Posterior cingulate gyrus (tissue), 11 donors: ENCODE measurements at regions of chr9 and their contacts with region 1.

Region 1: DNA sequence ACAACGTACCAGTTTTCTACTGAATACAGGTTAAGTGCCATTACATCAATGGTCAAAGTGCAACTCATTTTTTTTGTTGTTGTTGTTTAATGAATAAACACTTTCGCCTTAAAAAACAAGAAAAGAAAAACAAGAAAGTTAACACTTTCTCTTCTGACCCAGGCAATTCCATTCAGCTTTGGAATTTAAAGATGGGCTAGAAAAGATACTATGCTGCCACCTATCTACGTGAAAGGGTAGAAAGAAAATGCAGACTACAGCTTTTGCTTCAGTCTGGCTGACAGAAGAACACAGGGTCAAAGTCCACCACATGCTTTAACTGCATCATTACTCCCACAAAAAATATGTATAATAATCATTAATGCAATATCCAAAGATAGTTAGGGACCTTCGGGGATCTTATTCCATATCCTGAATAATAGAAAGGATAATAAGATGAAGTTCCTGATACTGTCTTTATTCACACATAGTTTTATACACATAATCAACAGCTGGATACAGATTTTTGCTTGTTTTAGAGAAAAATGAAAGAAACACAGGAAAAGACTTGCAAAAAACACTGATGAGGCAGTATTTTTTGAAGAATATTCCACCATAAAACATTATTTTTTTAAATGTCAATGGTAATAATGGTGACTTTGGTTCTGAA is 40.4 kb downstream of the ZDHHC21 start:
- DNase-seq: no peak

Region 2: DNA sequence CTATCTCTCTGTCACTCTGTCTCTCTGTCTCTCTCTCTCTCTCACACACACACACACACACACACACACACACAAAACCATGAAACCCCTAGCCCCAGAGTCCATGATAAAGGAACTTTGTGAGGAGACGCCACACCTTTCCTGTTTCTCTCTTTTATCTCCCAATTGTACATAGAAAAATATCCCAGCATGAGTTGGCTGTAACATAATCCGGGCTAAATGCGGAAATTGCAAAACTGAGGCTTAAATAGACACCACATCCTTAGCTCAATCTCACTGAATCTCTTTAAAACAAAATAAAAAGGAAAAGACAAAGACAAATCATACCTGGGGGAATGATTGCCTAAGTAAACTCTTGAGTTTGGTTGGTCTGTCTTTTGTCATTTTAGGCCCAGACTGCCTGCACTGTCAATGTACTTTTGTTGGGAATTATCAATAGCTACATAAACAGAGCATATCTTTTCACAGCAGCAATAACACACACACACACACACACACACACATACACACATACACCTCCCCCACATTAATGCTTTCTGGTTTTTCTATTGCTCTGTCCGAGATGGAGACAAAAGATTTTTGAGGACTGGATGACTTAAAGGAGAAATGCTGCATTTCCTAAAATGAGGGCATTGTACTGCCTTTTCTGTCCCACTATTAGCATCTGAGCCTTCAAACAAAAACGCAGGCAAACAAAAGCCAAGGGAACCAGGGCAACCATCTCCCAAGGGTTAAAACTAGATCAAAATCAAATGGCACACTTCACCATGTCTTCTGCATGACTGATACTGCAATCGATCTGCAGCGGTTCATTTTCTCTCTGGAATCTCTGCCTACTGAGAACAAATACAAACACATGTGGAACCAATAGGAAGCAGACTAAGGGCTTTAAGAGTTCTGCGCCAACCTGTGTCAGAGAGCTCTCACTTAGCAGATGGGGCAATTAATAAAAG is 660.4 kb before region 1 on chr9:
- intact Hi-C with region 1: loop called (anchors 10 kb)
- DNase-seq: no peak

Region 3: GRCh38 chr9:14616188-14616982 is 36.5 kb before region 1 on chr9:
- intact Hi-C with region 1: loop called (anchors 5 kb)
- DNase-seq: no peak